Panc1 (cell line): ENCODE measurements at regions of chr3 and their contacts with region 1.

Region 1: DNA sequence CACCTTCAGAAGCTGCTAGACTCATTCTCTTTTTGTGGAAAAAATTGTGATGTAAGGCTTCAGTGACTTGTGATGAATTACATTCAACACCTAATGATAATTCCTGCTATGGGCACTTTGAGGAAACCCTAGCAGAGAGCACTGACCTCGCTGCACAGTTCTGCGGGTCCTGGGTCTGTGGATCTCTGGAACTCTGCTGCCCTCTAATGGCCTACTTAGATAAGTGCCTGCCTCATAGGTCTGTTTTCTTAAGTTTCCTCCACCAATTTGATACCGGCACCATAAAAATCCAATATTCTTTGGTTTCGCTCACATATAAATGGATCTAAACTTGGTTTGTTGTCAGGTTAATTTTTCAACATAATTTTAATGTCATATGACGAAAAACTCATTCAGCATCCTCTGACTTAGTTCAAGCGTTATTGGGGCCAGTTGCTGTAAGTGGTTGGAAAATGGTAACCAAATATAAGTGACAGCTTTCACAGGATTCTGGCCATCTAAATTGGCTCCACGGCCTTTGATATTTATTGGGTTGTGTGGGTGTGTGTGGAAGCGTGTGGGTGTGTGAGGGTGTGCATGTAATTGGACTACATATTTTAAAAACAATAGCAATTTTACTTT is 10.4 kb downstream of the SLITRK3 start:
- DNase-seq: peak; percentile 32
- ATAC-seq: peak; percentile 94
- H3K4me3 ChIP-seq: no peak overlapping the region
- H3K27ac ChIP-seq: no peak overlapping the region
- H3K4me1 ChIP-seq: no peaks in the 10 kb centered on the region
- H3K27me3 ChIP-seq: no peaks in the 10 kb centered on the region
- CTCF ChIP-seq: peak; percentile 89

Region 2: DNA sequence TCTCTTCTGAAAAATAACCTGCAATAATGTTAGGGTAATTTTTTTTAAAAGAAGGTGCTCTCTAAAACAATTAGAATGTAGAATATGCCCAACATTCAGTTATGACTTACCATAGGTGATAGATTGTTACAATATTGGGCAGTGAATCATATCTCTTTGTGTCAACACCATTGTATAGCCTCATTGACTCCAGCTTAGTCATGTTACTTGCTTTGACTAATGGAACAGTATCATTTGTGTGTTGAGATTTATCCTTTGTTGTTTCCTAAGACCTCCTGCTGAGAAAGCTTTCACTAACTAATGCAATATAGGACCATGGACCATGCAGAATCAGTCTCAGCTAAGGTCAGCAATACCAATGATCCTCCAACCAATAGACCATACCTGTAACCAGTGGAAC is 1214.0 kb before region 1 on chr3:
- CTCF ChIA-PET with region 1: no interaction called
- POLR2A ChIA-PET with region 1: no interaction called
- in situ Hi-C with region 1: no loop called
- intact Hi-C with region 1: loop called (anchors 10 kb)
- DNase-seq: no peak
- ATAC-seq: no peak
- H3K4me3 ChIP-seq: no peak overlapping the region
- H3K27ac ChIP-seq: no peak overlapping the region
- H3K4me1 ChIP-seq: no peaks in the 10 kb centered on the region
- H3K27me3 ChIP-seq: no peaks in the 10 kb centered on the region
- CTCF ChIP-seq: no peak

Region 3: DNA sequence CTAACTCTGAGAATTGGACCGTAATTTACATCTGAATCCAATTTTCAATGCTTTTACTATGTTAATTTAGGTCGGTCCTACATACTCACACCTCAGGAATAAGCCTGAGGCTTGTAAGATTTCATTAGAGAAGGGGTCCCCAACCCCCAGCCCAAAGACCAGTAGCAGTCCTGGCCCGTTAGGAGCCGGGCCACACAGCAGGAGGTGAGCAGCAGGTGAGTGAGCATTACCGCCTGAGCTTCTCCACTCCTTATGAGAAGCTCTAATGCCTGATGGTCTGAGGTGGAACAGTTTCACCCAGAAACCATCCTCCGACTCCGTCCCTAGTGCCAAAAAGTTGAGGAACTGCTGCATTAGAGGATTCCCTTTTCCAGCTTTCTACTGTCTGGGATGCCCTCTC is 864.9 kb before region 1 on chr3:
- CTCF ChIA-PET with region 1: interaction called, 12 read pairs
- POLR2A ChIA-PET with region 1: no interaction called
- in situ Hi-C with region 1: no loop called
- intact Hi-C with region 1: no loop called
- DNase-seq: no peak
- ATAC-seq: no peak
- H3K4me3 ChIP-seq: no peak overlapping the region
- H3K27ac ChIP-seq: no peak overlapping the region
- H3K4me1 ChIP-seq: no peaks in the 10 kb centered on the region
- H3K27me3 ChIP-seq: no peaks in the 10 kb centered on the region
- CTCF ChIP-seq: no peak